ENCODE measurements at regions of chr10 and their contacts with region 1.

Region 1: DNA sequence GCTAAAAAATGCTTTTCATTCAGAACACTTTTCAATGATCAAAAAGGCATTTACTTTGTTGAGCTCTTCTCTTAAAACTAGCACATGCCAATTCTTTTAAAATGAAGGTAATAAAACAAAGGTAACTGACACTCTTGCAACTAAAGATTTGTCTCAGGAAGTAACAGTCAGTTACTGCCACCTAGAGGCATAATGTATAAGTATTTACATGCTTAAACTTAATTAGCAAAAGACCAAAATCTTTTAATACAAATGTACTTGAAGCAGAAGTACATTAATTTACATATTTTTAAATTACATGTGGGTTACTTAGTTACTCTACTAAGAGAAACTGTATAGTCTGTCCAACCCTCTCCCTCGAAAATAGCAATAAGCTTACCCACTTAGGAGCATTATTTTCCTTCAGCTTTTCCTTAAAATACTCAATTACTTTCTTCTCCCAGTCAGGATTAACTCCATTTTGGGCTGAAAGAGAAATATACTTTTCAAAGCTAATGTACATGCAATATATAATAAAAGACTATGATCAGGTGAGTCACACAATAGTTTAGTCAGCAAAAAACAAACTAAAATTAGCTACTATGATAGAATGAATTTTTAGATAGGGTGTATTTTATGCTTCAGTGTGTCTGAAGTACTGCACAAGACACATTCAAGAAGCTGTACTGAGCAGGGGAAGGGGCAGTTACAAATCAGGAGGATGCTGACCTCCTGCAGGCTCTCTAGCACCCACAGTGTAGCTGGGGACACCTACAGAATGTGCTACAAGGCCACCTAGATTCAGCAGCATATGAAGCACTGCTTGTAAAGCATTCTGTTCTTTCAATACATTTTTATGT is 13.0 kb downstream of the MCMBP start:
- DNase-seq: no peak
- ATAC-seq: peak; percentile 69
- H3K4me3 ChIP-seq: no peak overlapping the region
- H3K27ac ChIP-seq: no peak overlapping the region
- H3K4me1 ChIP-seq: peaks cover 17% of the 10 kb centered on the region
- H3K27me3 ChIP-seq: no peaks in the 10 kb centered on the region
- CTCF ChIP-seq: peak; percentile 71; the same call in 1 of the 2 replicates

Region 2: GRCh38 chr10:119608316-119609155 is 251.1 kb before region 1 on chr10:
- CTCF ChIA-PET with region 1: no interaction called
- POLR2A ChIA-PET with region 1: no interaction called
- in situ Hi-C with region 1: no loop called
- intact Hi-C with region 1: loop called (anchors 10 kb)
- DNase-seq: no peak
- ATAC-seq: peak; percentile 98
- H3K4me3 ChIP-seq: peak overlapping the region; percentile 15 to 46; a peak in 3 of 4 replicates
- H3K27ac ChIP-seq: peak overlapping the region; percentile 64
- H3K4me1 ChIP-seq: peaks cover 8% of the 10 kb centered on the region; the same call in 1 of the 2 replicates
- H3K27me3 ChIP-seq: no peaks in the 10 kb centered on the region
- CTCF ChIP-seq: peak; percentile 98

Region 3: GRCh38 chr10:119686439-119687191 is 173.0 kb before region 1 on chr10:
- CTCF ChIA-PET with region 1: interaction called, 3 read pairs
- POLR2A ChIA-PET with region 1: interaction called, 4 read pairs
- in situ Hi-C with region 1: no loop called
- intact Hi-C with region 1: loop called (anchors 5 kb)
- DNase-seq: no peak
- ATAC-seq: peak; percentile 93
- H3K4me3 ChIP-seq: peak overlapping the region; percentile 40 to 63
- H3K27ac ChIP-seq: peak overlapping the region; percentile 75
- H3K4me1 ChIP-seq: peaks cover 23% of the 10 kb centered on the region
- H3K27me3 ChIP-seq: no peaks in the 10 kb centered on the region
- CTCF ChIP-seq: peak; percentile 99

Region 4: DNA sequence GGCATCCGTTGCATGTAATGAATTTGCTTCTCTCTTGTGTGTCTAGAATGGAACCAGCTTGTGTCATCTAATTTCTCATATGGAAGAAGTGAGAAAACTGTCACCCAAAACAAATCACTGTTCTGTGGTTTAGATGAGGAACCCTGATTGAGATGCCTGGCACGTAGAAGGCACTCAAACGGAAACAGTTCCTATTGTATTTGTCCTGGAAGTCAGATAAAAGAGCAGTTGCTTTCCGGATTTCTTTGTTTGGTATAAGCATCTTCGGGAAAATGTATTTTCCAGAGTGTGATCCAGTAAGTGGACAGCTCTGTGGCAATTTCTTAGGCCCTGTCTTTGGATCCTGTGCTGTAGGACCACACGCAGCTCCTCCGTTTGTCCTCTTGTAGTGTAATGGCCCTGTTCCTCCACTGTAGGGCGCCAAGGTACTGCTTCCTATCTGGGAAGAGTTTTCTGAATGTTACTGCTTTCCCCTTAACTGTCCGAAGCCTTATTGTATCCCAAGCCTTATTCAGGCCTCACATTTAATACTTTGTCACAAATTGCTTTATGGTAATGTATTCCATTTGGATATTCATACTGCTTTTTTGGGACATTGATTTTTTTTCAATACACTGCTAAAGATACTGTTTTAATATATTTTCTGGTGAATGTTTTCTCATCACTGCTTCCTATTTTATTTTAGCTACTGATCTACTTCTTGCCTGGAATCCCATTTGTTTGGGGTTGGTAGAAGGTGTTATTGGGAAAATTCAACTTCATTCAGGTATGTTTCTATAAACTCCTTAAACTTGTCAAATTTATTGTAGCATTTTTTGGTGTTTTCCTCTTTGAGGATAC is 109.0 kb before region 1 on chr10:
- CTCF ChIA-PET with region 1: interaction called, 26 read pairs
- POLR2A ChIA-PET with region 1: no interaction called
- in situ Hi-C with region 1: no loop called
- intact Hi-C with region 1: loop called (anchors 2 kb)
- DNase-seq: peak; percentile 68
- ATAC-seq: peak; percentile 97
- H3K4me3 ChIP-seq: no peak overlapping the region
- H3K27ac ChIP-seq: no peak overlapping the region
- H3K4me1 ChIP-seq: peaks cover 7% of the 10 kb centered on the region
- H3K27me3 ChIP-seq: no peaks in the 10 kb centered on the region
- CTCF ChIP-seq: peak; percentile 99

Region 5: GRCh38 chr10:119807960-119808697 is 51.5 kb before region 1 on chr10:
- CTCF ChIA-PET with region 1: no interaction called
- POLR2A ChIA-PET with region 1: interaction called, 10 read pairs
- in situ Hi-C with region 1: no loop called
- intact Hi-C with region 1: no loop called
- DNase-seq: no peak
- ATAC-seq: no peak
- H3K4me3 ChIP-seq: no peak overlapping the region
- H3K27ac ChIP-seq: no peak overlapping the region
- H3K4me1 ChIP-seq: no peaks in the 10 kb centered on the region
- H3K27me3 ChIP-seq: no peaks in the 10 kb centered on the region
- CTCF ChIP-seq: no peak

Region 6: GRCh38 chr10:120574981-120575380 is 715.3 kb after region 1 on chr10:
- CTCF ChIA-PET with region 1: no interaction called
- POLR2A ChIA-PET with region 1: no interaction called
- in situ Hi-C with region 1: no loop called
- intact Hi-C with region 1: no loop called
- DNase-seq: no peak
- ATAC-seq: no peak
- H3K4me3 ChIP-seq: no peak overlapping the region
- H3K27ac ChIP-seq: no peak overlapping the region
- H3K4me1 ChIP-seq: no peaks in the 10 kb centered on the region
- H3K27me3 ChIP-seq: no peaks in the 10 kb centered on the region
- CTCF ChIP-seq: no peak